Activated T-helper 1 cell treated with anti-CD3 and anti-CD28 coated beads, Interleukin-12 subunit alpha, Interleukin-12 subunit beta, Interleukin-2, Interleukin-4 antibody, amounts not matched to agents 30 ng/mL and 10 ng/mL and 1 ng/mL, durations not matched to agents 14 hours and 24 hours and 36 hours (primary cell): ENCODE measurements at regions of chr10 and their contacts with region 1.

Region 1: GRCh38 chr10:103554488-103555324 is 61.2 kb downstream of the NEURL1 start:
- DNase-seq: peak; percentile 16
- H3K4me3 Mint-ChIP-seq: peak overlapping the region; percentile 72
- H3K27ac Mint-ChIP-seq: no peak overlapping the region
- H3K4me1 Mint-ChIP-seq: peaks cover 19% of the 10 kb centered on the region
- H3K27me3 Mint-ChIP-seq: peaks cover 16% of the 10 kb centered on the region

Region 2: DNA sequence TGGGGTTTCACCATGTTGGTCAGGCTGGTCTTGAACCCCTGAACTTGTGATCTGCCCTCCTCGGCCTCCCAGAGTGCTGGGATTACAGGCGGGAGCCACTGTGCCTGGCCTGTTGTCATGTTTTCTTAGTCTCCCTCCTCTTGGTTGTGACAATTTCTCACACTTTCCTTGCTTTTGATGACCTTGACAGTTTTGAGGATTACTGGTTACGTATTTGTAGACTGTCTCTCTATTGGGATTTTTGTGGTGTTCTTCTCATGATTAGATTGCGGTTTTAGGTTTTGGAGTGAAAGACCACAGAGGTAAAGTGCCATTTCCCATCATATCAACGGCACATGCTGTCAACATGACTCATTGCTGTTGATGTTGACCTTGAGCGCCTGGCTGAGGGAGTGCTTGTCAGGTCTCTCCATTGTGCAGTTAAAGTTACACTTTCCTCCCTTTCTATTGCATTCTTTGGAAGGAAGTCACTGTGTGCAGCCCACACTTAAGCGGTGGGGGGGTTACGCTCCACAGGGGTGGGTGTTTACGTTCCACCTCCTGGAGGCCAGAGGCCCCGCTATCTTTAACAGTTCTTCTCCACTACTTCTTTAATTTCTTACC is 50.4 kb before region 1 on chr10:
- intact Hi-C with region 1: loop called (anchors 1 kb)
- DNase-seq: peak; percentile 56
- H3K4me3 Mint-ChIP-seq: peak overlapping the region; percentile 40
- H3K27ac Mint-ChIP-seq: peak overlapping the region; percentile 77
- H3K4me1 Mint-ChIP-seq: peaks cover 53% of the 10 kb centered on the region
- H3K27me3 Mint-ChIP-seq: peaks cover 36% of the 10 kb centered on the region

Region 3: GRCh38 chr10:103584216-103585010 is 29.7 kb after region 1 on chr10:
- intact Hi-C with region 1: loop called (anchors 2 kb)
- DNase-seq: peak; percentile 52
- H3K4me3 Mint-ChIP-seq: peak overlapping the region; percentile 87
- H3K27ac Mint-ChIP-seq: peak overlapping the region; percentile 83
- H3K4me1 Mint-ChIP-seq: peaks cover 13% of the 10 kb centered on the region
- H3K27me3 Mint-ChIP-seq: peaks cover 8% of the 10 kb centered on the region

Region 4: GRCh38 chr10:103812432-103812831 is 257.7 kb after region 1 on chr10:
- intact Hi-C with region 1: no loop called
- DNase-seq: no peak
- H3K4me3 Mint-ChIP-seq: no peak overlapping the region
- H3K27ac Mint-ChIP-seq: no peak overlapping the region
- H3K4me1 Mint-ChIP-seq: peaks cover 13% of the 10 kb centered on the region
- H3K27me3 Mint-ChIP-seq: no peaks in the 10 kb centered on the region

Region 5: DNA sequence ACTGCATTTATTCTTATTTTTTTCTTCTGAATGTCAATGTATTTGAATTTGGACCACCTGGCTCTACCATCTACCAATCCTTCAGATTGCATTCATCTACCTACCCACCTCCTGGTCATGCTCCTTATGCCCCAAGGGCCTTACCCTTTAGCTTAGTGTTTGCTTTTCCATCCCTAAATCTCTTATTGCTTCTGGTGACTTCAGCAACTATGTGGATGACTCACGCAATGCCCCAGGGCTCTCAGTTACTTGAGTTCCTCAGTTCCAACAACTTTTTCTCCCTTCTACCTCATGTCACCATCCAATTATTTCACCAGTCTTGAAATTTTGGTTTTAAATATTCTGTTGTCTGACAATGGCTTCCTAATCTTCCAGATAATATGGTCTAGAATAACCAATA is 917.8 kb after region 1 on chr10:
- intact Hi-C with region 1: no loop called
- DNase-seq: no peak
- H3K4me3 Mint-ChIP-seq: no peak overlapping the region
- H3K27ac Mint-ChIP-seq: no peak overlapping the region
- H3K4me1 Mint-ChIP-seq: no peaks in the 10 kb centered on the region
- H3K27me3 Mint-ChIP-seq: peaks cover 4% of the 10 kb centered on the region